ENCODE measurements at regions of chr2 and their contacts with region 1.

Region 1: GRCh38 chr2:64330281-64331113 is 123.5 kb upstream of the LGALSL start:
- DNase-seq: peak; percentile 89
- H3K4me3 Mint-ChIP-seq: no peak overlapping the region
- H3K27ac Mint-ChIP-seq: no peak overlapping the region
- H3K4me1 Mint-ChIP-seq: peaks cover 41% of the 10 kb centered on the region
- H3K27me3 Mint-ChIP-seq: no peaks in the 10 kb centered on the region

Region 2: GRCh38 chr2:63903003-63903402 is 427.5 kb before region 1 on chr2:
- CTCF ChIA-PET with region 1: no interaction called
- intact Hi-C with region 1: loop called (anchors 5 kb)
- DNase-seq: no peak
- H3K4me3 Mint-ChIP-seq: no peak overlapping the region
- H3K27ac Mint-ChIP-seq: no peak overlapping the region
- H3K4me1 Mint-ChIP-seq: peaks cover 18% of the 10 kb centered on the region
- H3K27me3 Mint-ChIP-seq: no peaks in the 10 kb centered on the region

Region 3: GRCh38 chr2:64108666-64109241 is 221.7 kb before region 1 on chr2:
- CTCF ChIA-PET with region 1: interaction called, 10 read pairs
- intact Hi-C with region 1: no loop called
- DNase-seq: peak; percentile 13
- H3K4me3 Mint-ChIP-seq: no peak overlapping the region
- H3K27ac Mint-ChIP-seq: peak overlapping the region; percentile 36
- H3K4me1 Mint-ChIP-seq: peaks cover 75% of the 10 kb centered on the region
- H3K27me3 Mint-ChIP-seq: no peaks in the 10 kb centered on the region

Region 4: GRCh38 chr2:64222351-64222750 is 108.1 kb before region 1 on chr2:
- CTCF ChIA-PET with region 1: interaction called, 41 read pairs
- intact Hi-C with region 1: no loop called
- DNase-seq: no peak
- H3K4me3 Mint-ChIP-seq: no peak overlapping the region
- H3K27ac Mint-ChIP-seq: no peak overlapping the region
- H3K4me1 Mint-ChIP-seq: peaks cover 51% of the 10 kb centered on the region
- H3K27me3 Mint-ChIP-seq: no peaks in the 10 kb centered on the region

Region 5: DNA sequence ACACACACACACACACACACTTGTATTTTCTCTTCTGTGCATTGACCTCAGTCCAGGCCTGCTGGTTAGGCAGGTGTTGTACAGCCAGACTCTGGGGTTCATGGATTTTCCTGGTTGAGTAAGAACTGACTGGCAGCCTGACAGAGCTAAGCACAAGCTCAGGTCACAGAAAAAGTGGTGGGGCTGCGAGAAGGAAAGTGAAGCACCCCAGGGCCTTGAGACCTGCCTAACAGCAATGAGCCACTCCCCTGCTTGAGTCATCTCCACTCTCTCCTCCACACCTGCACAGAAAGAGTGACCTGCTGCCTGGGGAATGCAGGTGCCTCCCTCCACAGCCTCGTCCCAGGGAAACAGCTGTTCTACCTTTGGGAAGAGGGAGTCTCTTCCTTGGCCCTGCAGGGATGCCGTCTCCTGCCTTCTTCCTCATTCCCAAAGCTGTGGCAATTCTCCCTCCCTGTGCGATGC is 32.1 kb after region 1 on chr2:
- CTCF ChIA-PET with region 1: interaction called, 11 read pairs
- intact Hi-C with region 1: no loop called
- DNase-seq: no peak
- H3K4me3 Mint-ChIP-seq: no peak overlapping the region
- H3K27ac Mint-ChIP-seq: no peak overlapping the region
- H3K4me1 Mint-ChIP-seq: peaks cover 5% of the 10 kb centered on the region
- H3K27me3 Mint-ChIP-seq: peaks cover 2% of the 10 kb centered on the region

Region 6: DNA sequence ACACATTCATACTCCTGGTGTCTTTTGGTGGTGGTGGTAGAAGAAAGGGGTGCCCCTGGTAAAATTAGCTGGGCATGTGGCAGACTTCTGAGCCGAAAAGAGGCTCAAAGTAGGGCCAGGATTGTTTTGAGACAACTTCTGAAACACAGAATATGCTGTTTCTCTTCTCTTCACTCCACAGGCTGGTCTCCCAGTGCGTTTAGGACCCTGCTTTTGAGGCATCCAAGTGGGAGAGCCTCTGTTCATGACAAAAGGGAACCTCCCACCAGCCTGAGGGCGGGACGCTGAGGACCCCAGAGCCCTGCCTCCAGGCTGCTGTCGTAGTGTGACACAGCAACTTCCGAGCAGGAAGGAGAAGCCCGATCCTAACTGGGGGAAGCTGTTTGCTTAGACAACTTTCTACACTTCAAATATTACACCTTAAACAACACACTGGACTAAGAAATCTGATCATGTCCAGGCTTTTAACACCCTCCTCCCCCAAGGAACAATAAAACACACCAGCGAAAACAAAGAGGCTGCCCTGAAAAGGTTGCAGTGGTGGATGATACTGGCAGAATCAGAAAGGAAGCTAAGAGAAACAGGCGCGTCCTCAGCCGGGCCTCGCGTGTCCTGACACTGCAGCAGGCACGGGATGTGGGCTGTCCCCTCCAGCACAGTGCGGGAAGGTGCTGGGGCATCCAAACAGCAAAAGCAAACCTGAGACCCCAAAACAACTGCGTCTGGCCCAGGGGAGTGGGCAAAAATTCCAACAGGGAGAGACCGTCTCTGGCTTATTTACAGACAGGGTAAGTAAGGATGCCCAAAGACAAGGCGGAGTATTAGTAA is 313.9 kb after region 1 on chr2:
- CTCF ChIA-PET with region 1: no interaction called
- intact Hi-C with region 1: loop called (anchors 2 kb)
- DNase-seq: peak; percentile 78
- H3K4me3 Mint-ChIP-seq: peak overlapping the region; percentile 87
- H3K27ac Mint-ChIP-seq: peak overlapping the region; percentile 87
- H3K4me1 Mint-ChIP-seq: peaks cover 80% of the 10 kb centered on the region
- H3K27me3 Mint-ChIP-seq: no peaks in the 10 kb centered on the region